Gastrocnemius medialis (tissue), 4 donors: ENCODE measurements at regions of chr15 and their contacts with region 1.

Region 1: DNA sequence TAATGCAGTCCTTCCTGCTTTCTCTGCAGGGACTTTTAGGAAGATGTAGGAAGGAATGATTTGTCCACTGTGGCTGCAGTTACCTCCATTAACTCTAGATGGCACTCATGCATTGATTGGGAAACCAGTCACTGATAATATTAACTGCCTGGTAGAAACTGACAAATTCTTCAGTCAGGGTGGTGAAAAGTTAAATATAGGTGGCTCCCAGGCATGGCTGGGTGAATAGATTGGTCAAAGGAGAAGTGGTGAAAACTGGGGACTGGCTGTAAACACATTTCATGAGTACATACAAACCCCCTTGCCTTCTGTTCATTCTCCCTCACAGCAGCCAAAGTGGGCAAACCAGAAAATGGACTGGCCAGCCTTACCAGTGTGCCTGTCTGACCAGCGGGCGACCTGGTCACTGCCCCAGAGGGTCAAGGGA is 333.4 kb downstream of the THSD4 start:
- DNase-seq: peak in 1 of 2 donors; percentile 6
- ATAC-seq: peak; percentile 64 to 68
- H3K4me3 ChIP-seq: no peak overlapping the region
- H3K27ac ChIP-seq: peak overlapping the region in 1 of 4 donors; percentile 63
- H3K4me1 ChIP-seq: peaks cover 6 to 11% of the 10 kb centered on the region in 2 donors
- H3K27me3 ChIP-seq: no peaks in the 10 kb centered on the region
- CTCF ChIP-seq: peak; percentile 75 to 91 (median 84)
- POLR2A ChIP-seq: no peak

Region 2: DNA sequence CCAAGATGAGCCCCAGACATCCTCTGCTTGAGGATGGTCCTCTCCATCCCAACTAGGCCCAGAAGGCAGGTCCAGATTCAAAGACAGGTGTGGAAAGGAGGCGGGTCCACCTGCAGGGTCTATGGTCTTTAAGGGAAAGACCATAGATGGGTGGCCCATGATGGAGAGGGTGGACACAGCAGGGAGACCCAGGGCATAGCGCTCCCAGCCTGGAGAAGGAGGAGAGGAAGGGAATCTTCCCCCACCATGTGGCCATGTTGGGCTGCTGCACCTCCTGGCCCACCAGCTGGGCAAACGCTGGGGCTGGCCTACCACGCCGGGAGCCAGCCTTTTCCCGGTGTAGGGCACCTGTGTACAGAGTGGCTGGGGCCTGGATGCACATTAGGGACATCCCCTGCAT is 1085.8 kb before region 1 on chr15:
- in situ Hi-C with region 1: no loop called
- intact Hi-C with region 1: no loop called
- DNase-seq: no peak
- ATAC-seq: no peak
- H3K4me3 ChIP-seq: no peak overlapping the region
- H3K27ac ChIP-seq: no peak overlapping the region
- H3K4me1 ChIP-seq: no peaks in the 10 kb centered on the region
- H3K27me3 ChIP-seq: no peaks in the 10 kb centered on the region
- CTCF ChIP-seq: peak in 4 of 5 experiments; percentile 33 to 57 (median 54)
- POLR2A ChIP-seq: no peak

Region 3: DNA sequence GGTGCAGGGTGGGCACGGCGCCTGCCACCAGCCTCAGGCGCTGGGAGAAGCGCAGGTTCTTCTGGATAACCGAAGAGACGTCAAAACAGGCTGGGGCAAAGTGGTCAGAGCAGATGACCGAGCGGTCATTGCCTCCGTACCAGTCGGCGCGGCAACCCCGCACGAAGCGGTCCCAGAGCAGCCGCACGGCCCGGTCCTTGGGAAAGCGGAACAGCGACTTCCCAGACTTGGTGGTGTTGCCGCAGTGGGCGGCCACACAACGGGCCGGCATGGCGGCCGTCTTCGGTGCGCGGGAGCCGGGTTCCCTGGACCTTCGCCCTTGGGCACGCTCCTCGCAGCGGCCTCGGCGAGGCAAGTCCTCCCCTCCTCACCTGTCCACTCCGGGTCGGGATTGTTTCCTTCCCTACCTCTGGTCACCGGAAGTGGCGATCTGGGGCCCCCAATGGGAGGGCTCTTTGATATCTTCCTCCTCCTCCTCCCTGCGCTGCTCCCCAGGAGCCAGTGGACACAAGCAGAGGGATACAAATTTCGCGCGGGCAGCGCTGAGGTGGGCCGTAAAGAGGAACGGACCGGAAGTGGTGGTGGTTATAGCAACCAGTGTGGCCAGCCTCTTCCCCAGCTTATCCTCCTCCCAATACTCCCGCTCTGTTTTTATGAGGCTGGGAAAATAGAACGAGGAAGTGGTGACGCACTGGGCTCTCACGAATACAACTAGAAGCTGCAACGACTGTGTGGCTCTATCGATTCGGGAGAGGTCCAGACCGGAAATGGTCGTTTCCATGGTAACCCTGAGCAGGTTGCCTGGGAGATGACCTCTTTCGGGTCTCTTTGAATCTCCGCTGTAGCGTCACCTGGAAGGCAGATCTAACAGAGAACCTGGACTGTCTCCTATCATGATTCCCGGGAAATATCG is 556.4 kb before region 1 on chr15 and contains the starts of genes LRRC49 and THAP10:
- in situ Hi-C with region 1: no loop called
- intact Hi-C with region 1: loop called (anchors 10 kb)
- DNase-seq: peak; percentile 68 to 82
- ATAC-seq: peak; percentile 95 to 96
- H3K4me3 ChIP-seq: peak within 1 kb of the TSS; percentile 72 to 88 (median 84)
- H3K27ac ChIP-seq: peak within 1 kb of the TSS; percentile 64 to 72 (median 67)
- H3K4me1 ChIP-seq: peaks cover 6 to 17% of the 10 kb centered on the region in 2 donors
- H3K27me3 ChIP-seq: no peaks in the 10 kb centered on the region
- CTCF ChIP-seq: no peak
- POLR2A ChIP-seq: no peak
- total RNA-seq, gene LRRC49: 0.51 to 5.0 (median 2.8) TPM
- total RNA-seq, gene THAP10: 0.46 to 2.3 (median 1.1) TPM

Region 4: GRCh38 chr15:71114896-71115554 is 333.7 kb before region 1 on chr15 and contains the start of gene THSD4:
- in situ Hi-C with region 1: loop called (anchors 5 to 10 kb)
- intact Hi-C with region 1: no loop called
- DNase-seq: peak; percentile 18 to 60
- ATAC-seq: peak; percentile 73 to 89
- H3K4me3 ChIP-seq: peak within 1 kb of the TSS; percentile 60 to 71 (median 64)
- H3K27ac ChIP-seq: peak within 1 kb of the TSS in 3 of 4 donors; percentile 65 to 79 (median 76)
- H3K4me1 ChIP-seq: peaks cover 10 to 13% of the 10 kb centered on the region in 2 donors
- H3K27me3 ChIP-seq: no peaks in the 10 kb centered on the region
- CTCF ChIP-seq: peak; percentile 93 to 99 (median 96)
- POLR2A ChIP-seq: no peak
- total RNA-seq, gene THSD4: 0.35 to 3.1 (median 0.60) TPM

Region 5: DNA sequence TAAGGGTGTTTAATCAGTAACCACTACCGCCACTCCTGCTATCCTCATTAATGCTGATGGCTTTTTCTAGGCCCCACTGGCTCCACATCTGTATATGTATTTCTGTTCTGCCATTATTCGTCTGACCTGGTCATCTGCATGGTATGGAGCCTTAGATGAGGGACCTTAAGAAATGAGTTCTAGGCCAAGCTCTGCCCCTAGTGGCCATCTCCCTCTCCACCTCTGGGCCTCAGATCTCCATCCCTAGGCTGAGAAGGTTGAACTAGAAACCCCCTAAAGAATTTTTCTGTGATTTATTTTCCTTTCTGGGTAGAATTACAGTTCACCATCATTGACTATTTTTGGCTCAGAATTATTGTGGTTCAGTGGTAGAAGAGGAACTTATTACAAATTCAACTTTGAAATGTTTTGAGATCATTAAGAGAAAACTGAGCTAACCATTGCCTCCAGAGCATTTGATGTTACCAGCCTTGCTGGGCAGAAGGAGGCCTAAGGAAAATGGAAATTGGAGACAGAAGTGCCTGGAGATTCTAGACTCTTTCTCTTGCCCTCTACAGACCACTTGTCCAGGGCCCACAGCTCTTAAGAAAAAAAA is 36.5 kb after region 1 on chr15:
- in situ Hi-C with region 1: no loop called
- intact Hi-C with region 1: no loop called
- DNase-seq: no peak
- ATAC-seq: no peak
- H3K4me3 ChIP-seq: no peak overlapping the region
- H3K27ac ChIP-seq: no peak overlapping the region
- H3K4me1 ChIP-seq: no peaks in the 10 kb centered on the region
- H3K27me3 ChIP-seq: no peaks in the 10 kb centered on the region
- CTCF ChIP-seq: no peak
- POLR2A ChIP-seq: no peak

Region 6: DNA sequence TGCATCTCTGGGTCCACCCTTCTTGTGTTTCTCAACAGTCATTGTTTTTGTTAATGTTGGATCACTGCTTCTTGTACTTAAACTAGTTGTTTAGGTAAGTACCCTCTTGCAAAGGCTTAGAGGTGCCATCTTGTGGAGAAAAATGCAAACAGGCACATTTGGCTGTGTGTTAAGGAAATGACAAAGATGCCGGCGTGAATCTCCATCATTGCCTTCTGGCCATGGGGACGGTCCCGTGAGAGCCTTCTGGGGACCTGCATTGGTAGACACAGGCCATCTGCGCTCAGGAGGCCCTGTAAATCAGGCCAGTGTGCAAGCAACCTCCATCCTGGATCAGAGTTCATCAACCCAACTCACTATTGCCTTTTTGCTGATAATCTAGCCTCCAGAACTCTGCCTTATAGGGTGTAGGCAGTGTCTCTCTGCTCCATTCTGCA is 203.1 kb after region 1 on chr15:
- in situ Hi-C with region 1: loop called in 1 of 4 experiments (anchors 10 kb)
- intact Hi-C with region 1: loop called (anchors 2 kb)
- DNase-seq: no peak
- ATAC-seq: no peak
- H3K4me3 ChIP-seq: no peak overlapping the region
- H3K27ac ChIP-seq: no peak overlapping the region
- H3K4me1 ChIP-seq: peaks cover 0 to 6% of the 10 kb centered on the region in 2 donors
- H3K27me3 ChIP-seq: no peaks in the 10 kb centered on the region
- CTCF ChIP-seq: peak in 4 of 5 experiments; percentile 13 to 46 (median 35)
- POLR2A ChIP-seq: no peak

Region 7: DNA sequence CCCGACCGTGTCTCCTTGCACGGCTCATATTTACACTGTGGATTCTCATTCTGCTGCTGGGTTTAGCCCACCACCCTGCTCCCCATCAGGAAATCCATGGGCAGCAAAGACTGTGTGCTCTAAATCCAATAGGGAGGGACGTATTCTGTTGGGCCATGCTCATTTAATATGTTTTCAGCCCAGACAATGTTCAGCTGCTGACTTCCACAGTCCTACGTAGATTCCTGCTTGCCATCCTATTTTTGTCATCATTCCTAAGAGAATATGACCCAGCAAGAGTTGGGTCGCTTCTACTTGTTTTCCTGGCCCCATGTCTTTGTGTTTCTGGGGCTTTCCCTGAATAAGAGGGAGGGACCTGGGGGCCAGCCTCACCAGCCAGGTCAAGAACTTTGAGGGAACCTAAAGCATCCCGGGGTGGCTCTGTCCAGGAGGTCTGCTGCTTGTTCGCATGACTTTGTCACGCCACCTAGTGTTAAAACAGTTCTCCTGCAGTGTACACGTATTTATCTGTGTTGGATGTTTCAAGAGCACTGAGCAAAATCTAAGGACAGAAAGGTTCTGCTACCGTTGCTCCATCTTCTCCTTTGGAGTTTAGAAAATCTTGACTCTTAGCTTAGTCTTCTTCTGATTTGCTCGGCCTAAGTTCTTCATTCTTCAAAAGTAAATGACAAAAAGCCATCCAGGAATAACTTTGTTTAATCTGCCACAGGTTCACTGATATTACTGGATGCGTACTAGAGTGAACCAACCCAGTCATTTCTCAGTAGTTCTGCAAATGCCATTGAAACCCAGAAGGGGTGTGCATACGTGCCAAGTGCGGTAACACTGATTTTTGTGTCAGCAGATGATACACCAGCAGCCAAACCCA is 281.8 kb after region 1 on chr15:
- in situ Hi-C with region 1: loop called (anchors 5 to 10 kb)
- intact Hi-C with region 1: loop called (anchors 1 kb)
- DNase-seq: no peak
- ATAC-seq: peak; percentile 81 to 82
- H3K4me3 ChIP-seq: no peak overlapping the region
- H3K27ac ChIP-seq: no peak overlapping the region
- H3K4me1 ChIP-seq: peaks cover 0 to 3% of the 10 kb centered on the region in 2 donors
- H3K27me3 ChIP-seq: no peaks in the 10 kb centered on the region
- CTCF ChIP-seq: peak; percentile 51 to 85 (median 73)
- POLR2A ChIP-seq: no peak

Region 8: DNA sequence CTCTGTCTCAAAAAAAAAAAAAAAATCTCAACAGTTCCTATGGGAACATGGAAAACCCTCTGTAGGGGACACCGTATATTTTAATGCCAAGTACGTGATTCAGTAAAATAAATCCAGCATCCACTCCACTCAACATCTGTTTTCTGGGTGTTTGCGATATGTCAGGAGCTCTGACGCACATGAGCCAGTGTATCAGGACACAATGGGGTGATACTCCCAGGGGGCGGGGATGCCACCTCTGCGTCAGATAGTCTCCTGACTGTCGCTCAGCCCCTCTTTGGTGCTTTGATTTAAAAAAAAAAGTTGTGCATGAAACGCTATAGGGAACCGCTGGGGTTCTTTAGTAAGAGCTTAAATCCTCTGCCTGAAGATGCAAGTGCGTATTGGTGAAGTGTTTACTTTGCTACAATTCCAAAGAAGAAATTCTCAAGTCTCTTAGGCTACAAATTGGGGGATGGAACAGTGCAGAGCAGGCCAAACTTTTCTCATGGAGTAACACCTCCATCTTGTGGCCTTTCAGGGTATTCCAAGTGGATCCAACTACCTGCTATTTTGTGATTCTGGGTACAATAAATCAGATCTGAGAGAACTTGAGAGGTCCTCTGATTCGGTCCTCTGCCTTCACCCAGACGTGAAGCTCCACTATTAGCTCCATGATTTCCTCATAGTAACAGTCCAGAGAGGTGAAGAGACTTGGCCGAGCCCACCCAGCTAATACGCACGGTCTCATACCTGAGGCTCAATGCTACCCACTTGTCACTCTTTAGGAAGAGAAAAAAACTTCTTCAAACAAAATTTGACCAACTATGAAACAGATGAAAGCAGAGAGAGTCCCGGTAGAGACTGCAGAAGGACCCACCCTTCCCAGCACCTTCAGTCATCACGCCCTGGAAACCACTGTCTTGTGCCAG is 352.4 kb after region 1 on chr15:
- in situ Hi-C with region 1: no loop called
- intact Hi-C with region 1: loop called (anchors 2 kb)
- DNase-seq: no peak
- ATAC-seq: peak; percentile 56 to 63
- H3K4me3 ChIP-seq: no peak overlapping the region
- H3K27ac ChIP-seq: no peak overlapping the region
- H3K4me1 ChIP-seq: no peaks in the 10 kb centered on the region
- H3K27me3 ChIP-seq: no peaks in the 10 kb centered on the region
- CTCF ChIP-seq: peak; percentile 64 to 87 (median 79)
- POLR2A ChIP-seq: no peak

Region 9: DNA sequence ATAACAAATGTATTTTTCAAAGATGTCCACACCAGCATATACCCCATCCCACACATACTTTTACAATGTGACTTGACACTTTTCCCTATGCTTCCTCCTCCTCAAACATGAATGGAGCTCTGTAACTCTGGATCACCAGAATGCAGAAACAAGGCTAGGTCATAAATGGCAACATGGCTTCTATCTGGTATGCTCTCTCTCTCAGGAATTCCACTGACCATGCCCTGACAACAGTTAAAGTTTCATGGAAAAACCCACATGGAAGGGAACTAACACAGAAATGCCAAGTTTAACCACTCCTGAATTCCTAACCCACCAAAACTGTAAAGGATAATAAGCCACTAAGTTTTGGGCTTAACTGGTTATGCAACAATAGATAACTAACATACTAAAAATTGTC is 649.3 kb after region 1 on chr15:
- in situ Hi-C with region 1: no loop called
- intact Hi-C with region 1: no loop called
- DNase-seq: no peak
- ATAC-seq: no peak
- H3K4me3 ChIP-seq: no peak overlapping the region
- H3K27ac ChIP-seq: no peak overlapping the region
- H3K4me1 ChIP-seq: peaks cover 2% of the 10 kb centered on the region in 2 donors
- H3K27me3 ChIP-seq: no peaks in the 10 kb centered on the region
- CTCF ChIP-seq: no peak
- POLR2A ChIP-seq: no peak